ENCODE measurements at regions of chr11 and their contacts with region 1.

Region 1: GRCh38 chr11:6251120-6251733 is 8.4 kb upstream of the CCKBR start:
- DNase-seq: peak; percentile 47
- H3K4me3 ChIP-seq: no peak overlapping the region
- H3K27ac ChIP-seq: no peak overlapping the region
- H3K4me1 ChIP-seq: peaks cover 5% of the 10 kb centered on the region
- H3K27me3 ChIP-seq: peaks cover 19 to 28% of the 10 kb centered on the region in 2 experiments
- CTCF ChIP-seq: peak; percentile 76 to 78
- POLR2A ChIP-seq: no peak

Region 2: DNA sequence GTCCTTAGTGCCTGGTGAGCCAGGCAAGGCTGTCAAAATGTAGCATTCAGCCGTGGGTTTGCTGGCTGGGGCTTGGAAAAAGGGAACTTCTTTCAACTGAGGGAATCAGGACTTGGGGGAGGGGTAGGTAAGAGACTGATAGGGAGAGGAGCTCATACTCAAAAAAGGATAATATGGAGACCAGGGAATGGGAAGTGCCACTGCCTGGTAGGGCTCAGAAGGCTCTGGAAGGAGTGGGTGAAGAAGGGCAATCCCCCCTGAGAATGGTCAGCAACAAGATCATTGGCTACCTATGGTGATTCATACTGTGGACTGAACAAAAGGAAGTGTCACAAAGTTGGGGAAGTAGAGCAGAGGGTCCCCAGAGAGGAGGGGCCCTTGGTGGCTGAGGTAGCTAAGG is 10.4 kb before region 1 on chr11:
- CTCF ChIA-PET with region 1: interaction called, 40 read pairs
- POLR2A ChIA-PET with region 1: no interaction called
- dilution Hi-C with region 1: no loop called
- intact Hi-C with region 1: loop called (anchors 1 kb)
- DNase-seq: no peak
- H3K4me3 ChIP-seq: no peak overlapping the region
- H3K27ac ChIP-seq: no peak overlapping the region
- H3K4me1 ChIP-seq: no peaks in the 10 kb centered on the region
- H3K27me3 ChIP-seq: peaks cover 14% of the 10 kb centered on the region in 2 experiments
- CTCF ChIP-seq: no peak
- POLR2A ChIP-seq: no peak

Region 3: DNA sequence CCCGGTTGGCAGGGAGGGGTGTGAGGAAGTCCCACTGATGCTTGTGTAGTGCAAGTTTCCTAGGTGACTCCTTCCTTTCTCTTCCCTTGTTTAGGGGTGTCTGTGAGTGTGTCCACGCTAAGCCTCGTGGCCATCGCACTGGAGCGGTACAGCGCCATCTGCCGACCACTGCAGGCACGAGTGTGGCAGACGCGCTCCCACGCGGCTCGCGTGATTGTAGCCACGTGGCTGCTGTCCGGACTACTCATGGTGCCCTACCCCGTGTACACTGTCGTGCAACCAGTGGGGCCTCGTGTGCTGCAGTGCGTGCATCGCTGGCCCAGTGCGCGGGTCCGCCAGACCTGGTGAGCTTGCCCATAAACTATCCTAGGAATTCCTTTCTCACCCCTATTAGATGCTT is 18.8 kb after region 1 on chr11:
- CTCF ChIA-PET with region 1: interaction called, 20 read pairs
- POLR2A ChIA-PET with region 1: no interaction called
- dilution Hi-C with region 1: no loop called
- intact Hi-C with region 1: no loop called
- DNase-seq: no peak
- H3K4me3 ChIP-seq: no peak overlapping the region
- H3K27ac ChIP-seq: no peak overlapping the region
- H3K4me1 ChIP-seq: no peaks in the 10 kb centered on the region
- H3K27me3 ChIP-seq: peaks cover 0 to 7% of the 10 kb centered on the region in 2 experiments
- CTCF ChIP-seq: no peak
- POLR2A ChIP-seq: no peak

Region 4: DNA sequence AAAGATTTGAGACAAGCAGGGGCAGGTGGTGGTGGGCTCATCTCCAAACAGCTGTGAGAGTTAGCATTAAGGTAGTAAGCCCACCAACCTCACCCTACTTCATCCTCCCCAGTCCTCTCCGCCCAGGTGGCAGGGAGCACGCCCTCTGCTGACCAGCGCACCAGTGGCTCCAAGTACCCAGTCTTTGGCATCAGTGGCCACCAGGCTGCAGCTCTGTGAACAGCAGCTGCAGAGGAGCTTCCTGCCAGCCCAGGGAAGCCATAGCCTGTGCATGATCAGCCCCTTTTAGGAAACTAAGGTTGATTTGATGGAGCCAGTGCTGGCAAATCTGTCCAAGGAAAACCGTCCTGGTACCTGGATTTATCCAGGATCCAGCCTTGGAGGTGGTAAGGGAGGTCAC is 47.4 kb after region 1 on chr11:
- CTCF ChIA-PET with region 1: interaction called, 19 read pairs
- POLR2A ChIA-PET with region 1: no interaction called
- dilution Hi-C with region 1: no loop called
- intact Hi-C with region 1: loop called (anchors 2 kb)
- DNase-seq: peak; percentile 32
- H3K4me3 ChIP-seq: no peak overlapping the region
- H3K27ac ChIP-seq: no peak overlapping the region
- H3K4me1 ChIP-seq: no peaks in the 10 kb centered on the region
- H3K27me3 ChIP-seq: peaks cover 0 to 2% of the 10 kb centered on the region in 2 experiments
- CTCF ChIP-seq: peak; percentile 58 to 83
- POLR2A ChIP-seq: no peak

Region 5: GRCh38 chr11:6771926-6772893 is 521.0 kb after region 1 on chr11 and contains the start of gene OR2AG2:
- CTCF ChIA-PET with region 1: no interaction called
- POLR2A ChIA-PET with region 1: no interaction called
- dilution Hi-C with region 1: no loop called
- intact Hi-C with region 1: no loop called
- DNase-seq: no peak
- H3K4me3 ChIP-seq: no peak within 1 kb of the TSS
- H3K27ac ChIP-seq: no peak within 1 kb of the TSS
- H3K4me1 ChIP-seq: no peaks in the 10 kb centered on the region
- H3K27me3 ChIP-seq: peaks cover 2 to 3% of the 10 kb centered on the region in 2 experiments
- CTCF ChIP-seq: no peak
- POLR2A ChIP-seq: no peak
- total RNA-seq, gene OR2AG2: 0.33 and 0.46 TPM in 2 replicates

Measured in endothelial cell of umbilical vein (primary cell).